ENCODE measurements at regions of chr11 and their contacts with region 1.

Region 1: GRCh38 chr11:13955971-13956421 is 6.5 kb upstream of the SPON1 start:
- DNase-seq: peak; percentile 53

Region 2: DNA sequence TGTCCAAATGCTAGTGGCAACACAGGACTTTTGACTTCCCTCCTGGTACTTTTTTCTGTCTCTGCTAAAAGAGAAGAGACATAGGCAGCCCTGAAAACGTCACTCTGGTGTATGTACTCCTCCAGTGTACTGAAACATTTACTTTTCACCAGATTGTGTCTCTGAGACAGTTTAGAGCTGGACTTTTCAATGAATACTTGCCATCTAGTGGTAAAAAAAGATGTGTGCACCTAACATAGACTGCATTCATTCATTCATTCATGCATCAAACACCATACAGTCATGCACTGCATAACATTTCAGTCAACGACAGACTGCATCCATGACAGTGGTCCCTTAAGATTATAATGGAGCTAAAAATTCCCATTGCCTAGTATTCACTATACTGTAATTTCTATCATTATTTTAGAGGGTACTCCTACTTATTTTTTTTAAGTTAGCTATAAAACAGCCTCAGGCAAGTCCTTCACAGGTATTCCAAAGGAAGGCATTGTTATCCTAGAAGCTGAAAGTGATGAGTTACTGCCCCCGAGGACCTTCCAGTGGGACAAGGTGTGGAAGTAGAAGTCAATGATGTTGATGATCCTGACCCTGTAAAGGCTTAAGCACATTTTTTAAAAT is 192.8 kb after region 1 on chr11:
- CTCF ChIA-PET with region 1: interaction called, 17 read pairs
- POLR2A ChIA-PET with region 1: no interaction called
- DNase-seq: peak; percentile 28